Natural killer cell (primary cell): ENCODE measurements at regions of chr9 and their contacts with region 1.

Region 1: GRCh38 chr9:15485836-15486666 is 24.7 kb downstream of the PSIP1 start:
- DNase-seq: peak in 1 of 2 donors; percentile 55
- ATAC-seq: peak in 2 of 3 donors; percentile 35 to 47
- H3K4me3 ChIP-seq: no peak overlapping the region
- H3K4me3 Mint-ChIP-seq: no peak overlapping the region
- H3K27ac ChIP-seq: no peak overlapping the region
- H3K27ac Mint-ChIP-seq: peak overlapping the region in 1 of 2 donors; percentile 27
- H3K4me1 ChIP-seq: no peaks in the 10 kb centered on the region
- H3K4me1 Mint-ChIP-seq: peaks cover 3 to 21% of the 10 kb centered on the region in 2 donors
- H3K27me3 ChIP-seq: no peaks in the 10 kb centered on the region
- H3K27me3 Mint-ChIP-seq: no peaks in the 10 kb centered on the region
- CTCF ChIP-seq: peak; percentile 52

Region 2: GRCh38 chr9:15277400-15278090 is 208.5 kb before region 1 on chr9:
- intact Hi-C with region 1: loop called (anchors 5 kb)
- DNase-seq: peak in 1 of 2 donors; percentile 63
- ATAC-seq: peak in 2 of 3 donors; percentile 52 to 65
- H3K4me3 ChIP-seq: no peak overlapping the region
- H3K4me3 Mint-ChIP-seq: no peak overlapping the region
- H3K27ac ChIP-seq: no peak overlapping the region
- H3K27ac Mint-ChIP-seq: peak overlapping the region; percentile 42 to 58
- H3K4me1 ChIP-seq: peaks cover 6% of the 10 kb centered on the region
- H3K4me1 Mint-ChIP-seq: peaks cover 37 to 62% of the 10 kb centered on the region in 2 donors
- H3K27me3 ChIP-seq: no peaks in the 10 kb centered on the region
- H3K27me3 Mint-ChIP-seq: no peaks in the 10 kb centered on the region
- CTCF ChIP-seq: peak; percentile 46

Region 3: GRCh38 chr9:15725953-15726352 is 239.9 kb after region 1 on chr9:
- intact Hi-C with region 1: no loop called
- DNase-seq: no peak
- ATAC-seq: no peak
- H3K4me3 ChIP-seq: no peak overlapping the region
- H3K4me3 Mint-ChIP-seq: no peak overlapping the region
- H3K27ac ChIP-seq: no peak overlapping the region
- H3K27ac Mint-ChIP-seq: no peak overlapping the region
- H3K4me1 ChIP-seq: no peaks in the 10 kb centered on the region
- H3K4me1 Mint-ChIP-seq: no peaks in the 10 kb centered on the region
- H3K27me3 ChIP-seq: no peaks in the 10 kb centered on the region
- H3K27me3 Mint-ChIP-seq: no peaks in the 10 kb centered on the region
- CTCF ChIP-seq: no peak